ENCODE measurements at regions of chrX and their contacts with region 1.

Region 1: GRCh38 chrX:108131471-108131870 is 39.9 kb downstream of the ATG4A start:
- DNase-seq: peak; percentile 88
- H3K4me3 ChIP-seq: no peak overlapping the region
- H3K27ac ChIP-seq: peak overlapping the region; percentile 97
- H3K4me1 ChIP-seq: peaks cover 34% of the 10 kb centered on the region
- H3K27me3 ChIP-seq: no peaks in the 10 kb centered on the region
- CTCF ChIP-seq: no peak
- POLR2A ChIP-seq: peak; percentile 59

Region 2: GRCh38 chrX:107849740-107850421 is 281.6 kb before region 1 on chrX:
- CTCF ChIA-PET with region 1: no interaction called
- POLR2A ChIA-PET with region 1: no interaction called
- dilution Hi-C with region 1: no loop called
- intact Hi-C with region 1: loop called (anchors 1 kb)
- DNase-seq: peak; percentile 69
- H3K4me3 ChIP-seq: peak overlapping the region in 1 of 3 experiments; percentile 11
- H3K27ac ChIP-seq: peak overlapping the region; percentile 76
- H3K4me1 ChIP-seq: peaks cover 56% of the 10 kb centered on the region
- H3K27me3 ChIP-seq: no peaks in the 10 kb centered on the region
- CTCF ChIP-seq: no peak
- POLR2A ChIP-seq: no peak

Region 3: GRCh38 chrX:108020631-108021030 is 110.8 kb before region 1 on chrX:
- CTCF ChIA-PET with region 1: interaction called, 6 read pairs
- POLR2A ChIA-PET with region 1: no interaction called
- dilution Hi-C with region 1: no loop called
- intact Hi-C with region 1: loop called (anchors 1 kb)
- DNase-seq: peak; percentile 55
- H3K4me3 ChIP-seq: no peak overlapping the region
- H3K27ac ChIP-seq: no peak overlapping the region
- H3K4me1 ChIP-seq: peaks cover 19% of the 10 kb centered on the region
- H3K27me3 ChIP-seq: no peaks in the 10 kb centered on the region
- CTCF ChIP-seq: peak; percentile 26 to 44
- POLR2A ChIP-seq: no peak

Region 4: GRCh38 chrX:108025954-108026600 is 105.4 kb before region 1 on chrX:
- CTCF ChIA-PET with region 1: interaction called, 6 read pairs
- POLR2A ChIA-PET with region 1: no interaction called
- dilution Hi-C with region 1: no loop called
- intact Hi-C with region 1: loop called (anchors 1 kb)
- DNase-seq: peak; percentile 83
- H3K4me3 ChIP-seq: no peak overlapping the region
- H3K27ac ChIP-seq: peak overlapping the region; percentile 86
- H3K4me1 ChIP-seq: peaks cover 30% of the 10 kb centered on the region
- H3K27me3 ChIP-seq: no peaks in the 10 kb centered on the region
- CTCF ChIP-seq: no peak
- POLR2A ChIP-seq: no peak

Region 5: GRCh38 chrX:108091266-108091877 is 40.1 kb before region 1 on chrX and contains the starts of genes ATG4A and PSMD10:
- CTCF ChIA-PET with region 1: interaction called, 7 read pairs
- POLR2A ChIA-PET with region 1: interaction called, 17 read pairs
- dilution Hi-C with region 1: no loop called
- intact Hi-C with region 1: loop called (anchors 1 kb)
- DNase-seq: peak; percentile 97
- H3K4me3 ChIP-seq: peak within 1 kb of the TSS; percentile 82 to 98 (median 82)
- H3K27ac ChIP-seq: peak within 1 kb of the TSS; percentile 98
- H3K4me1 ChIP-seq: peaks cover 15% of the 10 kb centered on the region
- H3K27me3 ChIP-seq: no peaks in the 10 kb centered on the region
- CTCF ChIP-seq: no peak
- POLR2A ChIP-seq: peak; percentile 63
- total RNA-seq, gene ATG4A: 27.7 and 28.7 TPM in 2 replicates
- total RNA-seq, gene PSMD10: 71.9 and 82.7 TPM in 2 replicates

Region 6: GRCh38 chrX:108148524-108148923 is 17.1 kb after region 1 on chrX:
- CTCF ChIA-PET with region 1: no interaction called
- POLR2A ChIA-PET with region 1: no interaction called
- dilution Hi-C with region 1: no loop called
- intact Hi-C with region 1: no loop called
- DNase-seq: no peak
- H3K4me3 ChIP-seq: no peak overlapping the region
- H3K27ac ChIP-seq: no peak overlapping the region
- H3K4me1 ChIP-seq: no peaks in the 10 kb centered on the region
- H3K27me3 ChIP-seq: no peaks in the 10 kb centered on the region
- CTCF ChIP-seq: no peak
- POLR2A ChIP-seq: no peak

Measured in endothelial cell of umbilical vein (primary cell).